ENCODE measurements at regions of chr16 and their contacts with region 1.

Region 1: GRCh38 chr16:23858542-23858941 is 22.8 kb downstream of the PRKCB start:
- DNase-seq: no peak
- H3K4me3 ChIP-seq: no peak overlapping the region
- H3K27ac ChIP-seq: no peak overlapping the region
- H3K4me1 ChIP-seq: peaks cover 0 to 8% (median 3%) of the 10 kb centered on the region in 4 experiments; a peak in 2 of 7 replicates
- H3K27me3 ChIP-seq: peaks cover 2 to 16% (median 7%) of the 10 kb centered on the region in 4 experiments; a peak in 5 of 7 replicates
- CTCF ChIP-seq: no peak
- EP300 ChIP-seq: no peak
- POLR2A ChIP-seq: no peak
- RAD21 ChIP-seq: no peak

Region 2: GRCh38 chr16:23871924-23872323 is 13.4 kb after region 1 on chr16:
- CTCF ChIA-PET with region 1: interaction called, 19 read pairs
- POLR2A ChIA-PET with region 1: interaction called, 3 read pairs
- DNase-seq: no peak
- H3K4me3 ChIP-seq: no peak overlapping the region
- H3K27ac ChIP-seq: no peak overlapping the region
- H3K4me1 ChIP-seq: peaks cover 0 to 2% (median 0%) of the 10 kb centered on the region in 4 experiments; a peak in 2 of 7 replicates
- H3K27me3 ChIP-seq: peaks cover 3 to 19% (median 10%) of the 10 kb centered on the region in 4 experiments
- CTCF ChIP-seq: no peak
- EP300 ChIP-seq: no peak
- POLR2A ChIP-seq: no peak
- RAD21 ChIP-seq: no peak

Region 3: DNA sequence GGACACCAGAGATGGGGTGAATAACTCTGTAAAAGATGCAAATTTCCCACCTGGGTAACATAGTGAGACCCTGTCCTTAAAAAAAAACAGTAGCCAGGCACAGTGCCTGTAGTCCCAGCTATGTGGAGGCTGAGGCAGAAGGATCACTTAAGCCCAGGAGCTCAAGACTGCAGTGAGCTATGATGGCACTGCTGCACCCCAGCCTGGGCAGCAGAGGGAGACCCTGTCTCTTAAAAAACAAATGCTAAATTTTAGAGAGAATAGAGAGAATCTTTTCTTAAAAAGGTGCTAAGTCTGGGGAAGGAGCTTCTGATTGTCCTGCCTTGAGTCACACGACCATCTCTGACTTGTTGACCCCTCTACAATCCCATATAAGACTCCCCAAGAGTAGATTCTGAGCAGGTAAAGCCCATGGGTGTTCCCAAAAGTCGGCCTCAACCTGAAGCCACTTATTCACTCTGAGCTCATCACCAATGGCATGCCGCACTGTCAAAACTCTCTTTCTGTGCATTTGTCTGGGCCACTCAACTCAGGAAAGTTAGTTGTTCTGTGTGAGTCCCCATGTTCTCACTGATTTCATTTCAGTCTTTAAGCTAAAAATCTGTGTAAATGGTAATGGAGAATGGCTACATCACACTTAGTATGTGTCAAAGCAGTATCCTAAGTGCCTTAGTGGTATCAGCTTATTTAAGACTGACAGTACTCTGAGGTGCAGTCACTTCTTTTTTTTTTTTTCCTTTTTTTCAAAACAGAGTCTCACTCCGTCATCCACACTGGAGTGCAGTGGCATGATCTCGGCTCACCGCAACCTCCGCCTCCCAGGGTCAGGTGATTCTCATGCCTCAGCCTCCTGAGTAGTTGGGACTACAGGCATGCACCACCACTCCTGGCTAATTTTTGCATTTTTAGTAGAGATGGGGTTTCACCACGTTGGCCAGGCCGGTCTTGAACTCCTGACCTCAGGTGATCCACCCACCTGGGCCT is 18.9 kb after region 1 on chr16:
- CTCF ChIA-PET with region 1: interaction called, 19 read pairs
- POLR2A ChIA-PET with region 1: no interaction called
- DNase-seq: no peak
- H3K4me3 ChIP-seq: no peak overlapping the region
- H3K27ac ChIP-seq: no peak overlapping the region
- H3K4me1 ChIP-seq: no peaks in the 10 kb centered on the region
- H3K27me3 ChIP-seq: no peaks in the 10 kb centered on the region
- CTCF ChIP-seq: peak; percentile 32 to 47 (median 33); a peak in 3 of 4 replicates
- EP300 ChIP-seq: no peak
- POLR2A ChIP-seq: no peak
- RAD21 ChIP-seq: peak; percentile 55 to 67

Region 4: DNA sequence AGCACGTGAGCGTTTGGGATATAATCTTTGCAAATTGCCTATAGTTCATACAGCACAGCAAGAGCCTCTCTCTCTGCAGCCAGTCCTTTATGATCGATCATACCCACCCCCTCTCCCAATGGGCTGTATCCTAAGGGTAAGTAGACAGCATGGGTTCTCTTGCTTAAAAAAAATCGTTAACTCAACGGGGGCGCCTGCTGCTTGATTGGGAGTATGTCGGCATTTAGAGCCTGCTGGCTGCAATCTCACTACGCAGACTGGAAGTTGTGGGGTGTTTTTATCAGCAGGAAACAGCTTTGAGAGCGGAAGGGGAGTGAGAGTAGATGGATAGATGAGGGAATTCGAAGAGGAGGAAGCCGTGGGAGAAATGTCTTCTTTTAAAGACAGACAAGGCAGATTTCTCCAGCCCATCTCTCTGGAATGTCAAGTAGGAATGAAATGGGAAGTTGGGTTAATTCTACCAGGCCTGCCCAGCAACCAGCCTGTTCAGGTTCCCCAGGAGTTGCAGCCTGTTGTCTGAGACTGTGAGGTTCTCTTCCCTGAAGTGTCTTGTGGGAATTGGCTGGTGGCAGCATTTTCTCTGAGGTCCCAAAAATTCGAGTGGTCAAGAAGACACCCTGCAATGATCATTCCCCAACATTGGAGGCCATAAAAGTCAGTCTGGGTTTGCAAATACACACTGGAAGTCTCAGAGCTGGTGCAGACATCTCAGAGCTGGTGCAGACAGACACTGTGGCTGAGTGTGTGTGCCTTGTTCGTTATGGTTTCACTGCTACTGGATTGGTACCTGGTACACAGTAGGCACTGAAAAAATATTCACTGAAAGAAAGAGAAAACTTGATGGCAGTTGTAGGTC is 42.9 kb after region 1 on chr16:
- CTCF ChIA-PET with region 1: no interaction called
- POLR2A ChIA-PET with region 1: no interaction called
- DNase-seq: no peak
- H3K4me3 ChIP-seq: no peak overlapping the region
- H3K27ac ChIP-seq: no peak overlapping the region
- H3K4me1 ChIP-seq: peaks cover 5 to 19% (median 13%) of the 10 kb centered on the region in 4 experiments; a peak in 6 of 7 replicates
- H3K27me3 ChIP-seq: no peaks in the 10 kb centered on the region
- CTCF ChIP-seq: 0 out of 4 replicates have a peak, but pooled peaks of 1 of the 3 experiments have one; percentile 11
- EP300 ChIP-seq: no peak
- POLR2A ChIP-seq: no peak
- RAD21 ChIP-seq: peak in 1 of 2 experiments; percentile 23; a peak in 1 of 4 replicates

Measured in H1 (cell line).